HEK293 (cell line): ENCODE measurements at regions of chr6 and their contacts with region 1.

Region 1: DNA sequence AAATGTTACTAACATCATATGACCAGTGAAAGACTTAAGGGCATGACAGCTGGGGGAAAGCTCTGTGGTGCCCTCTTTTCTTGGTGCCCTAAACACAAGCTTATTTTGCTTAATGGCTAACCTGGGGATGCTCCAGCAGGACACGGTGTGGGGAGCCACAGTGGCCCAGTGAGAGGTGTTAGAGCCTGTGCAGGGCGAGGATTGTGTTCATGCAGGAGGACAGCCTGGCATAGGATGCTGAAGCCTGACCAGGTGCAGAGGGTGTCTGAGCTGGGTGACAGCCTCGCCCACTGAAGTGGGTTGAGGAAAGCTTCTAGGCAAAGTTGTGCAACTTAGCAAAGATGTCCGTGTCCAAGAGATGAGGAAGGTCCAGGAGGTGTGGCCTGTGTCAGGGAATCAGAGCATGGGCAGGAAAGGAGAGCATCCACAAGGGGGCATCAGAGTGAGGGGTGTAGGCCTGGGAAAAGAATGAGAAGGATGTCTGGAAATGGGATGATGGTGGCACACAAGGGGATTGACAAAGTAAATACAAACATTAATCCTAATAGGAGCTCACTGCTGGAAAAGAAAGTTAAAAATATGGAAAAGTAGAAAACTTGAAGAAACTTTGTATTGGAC is 33.9 kb downstream of the SLC17A4 start:
- H3K4me3 ChIP-seq: no peak overlapping the region
- H3K27ac ChIP-seq: no peak overlapping the region
- H3K4me1 ChIP-seq: no peaks in the 10 kb centered on the region
- CTCF ChIP-seq: peak; percentile 29; the same call in 1 of the 2 replicates

Region 2: DNA sequence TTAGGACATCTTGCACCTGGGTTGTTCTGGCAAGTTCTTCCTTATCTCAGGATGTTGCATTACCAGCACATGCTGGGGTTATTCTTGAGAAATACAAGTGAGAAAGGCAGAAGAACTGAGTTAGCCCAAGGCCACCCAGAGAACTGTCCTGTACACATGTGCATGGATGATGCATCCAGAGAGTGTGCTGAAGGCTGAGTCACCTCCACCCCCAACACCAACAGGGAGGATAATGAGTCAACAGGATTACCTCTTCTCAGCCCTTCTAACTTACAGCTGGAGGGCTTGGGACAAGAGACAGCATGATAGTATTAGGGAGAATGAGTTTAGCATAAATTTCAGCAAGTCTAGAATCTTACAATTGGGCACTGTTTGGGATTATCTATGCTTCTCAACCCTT is 127.9 kb before region 1 on chr6:
- CTCF ChIA-PET with region 1: no interaction called
- POLR2A ChIA-PET with region 1: no interaction called
- H3K4me3 ChIP-seq: no peak overlapping the region
- H3K27ac ChIP-seq: no peak overlapping the region
- H3K4me1 ChIP-seq: no peaks in the 10 kb centered on the region
- CTCF ChIP-seq: no peak

Region 3: GRCh38 chr6:25717866-25718740 is 70.3 kb before region 1 on chr6:
- CTCF ChIA-PET with region 1: interaction called, 11 read pairs
- POLR2A ChIA-PET with region 1: no interaction called
- H3K4me3 ChIP-seq: no peak overlapping the region
- H3K27ac ChIP-seq: no peak overlapping the region
- H3K4me1 ChIP-seq: no peaks in the 10 kb centered on the region
- CTCF ChIP-seq: no peak

Region 4: GRCh38 chr6:25804804-25805203 is 16.4 kb after region 1 on chr6:
- CTCF ChIA-PET with region 1: interaction called, 11 read pairs
- POLR2A ChIA-PET with region 1: no interaction called
- H3K4me3 ChIP-seq: no peak overlapping the region
- H3K27ac ChIP-seq: no peak overlapping the region
- H3K4me1 ChIP-seq: no peaks in the 10 kb centered on the region
- CTCF ChIP-seq: no peak

Region 5: DNA sequence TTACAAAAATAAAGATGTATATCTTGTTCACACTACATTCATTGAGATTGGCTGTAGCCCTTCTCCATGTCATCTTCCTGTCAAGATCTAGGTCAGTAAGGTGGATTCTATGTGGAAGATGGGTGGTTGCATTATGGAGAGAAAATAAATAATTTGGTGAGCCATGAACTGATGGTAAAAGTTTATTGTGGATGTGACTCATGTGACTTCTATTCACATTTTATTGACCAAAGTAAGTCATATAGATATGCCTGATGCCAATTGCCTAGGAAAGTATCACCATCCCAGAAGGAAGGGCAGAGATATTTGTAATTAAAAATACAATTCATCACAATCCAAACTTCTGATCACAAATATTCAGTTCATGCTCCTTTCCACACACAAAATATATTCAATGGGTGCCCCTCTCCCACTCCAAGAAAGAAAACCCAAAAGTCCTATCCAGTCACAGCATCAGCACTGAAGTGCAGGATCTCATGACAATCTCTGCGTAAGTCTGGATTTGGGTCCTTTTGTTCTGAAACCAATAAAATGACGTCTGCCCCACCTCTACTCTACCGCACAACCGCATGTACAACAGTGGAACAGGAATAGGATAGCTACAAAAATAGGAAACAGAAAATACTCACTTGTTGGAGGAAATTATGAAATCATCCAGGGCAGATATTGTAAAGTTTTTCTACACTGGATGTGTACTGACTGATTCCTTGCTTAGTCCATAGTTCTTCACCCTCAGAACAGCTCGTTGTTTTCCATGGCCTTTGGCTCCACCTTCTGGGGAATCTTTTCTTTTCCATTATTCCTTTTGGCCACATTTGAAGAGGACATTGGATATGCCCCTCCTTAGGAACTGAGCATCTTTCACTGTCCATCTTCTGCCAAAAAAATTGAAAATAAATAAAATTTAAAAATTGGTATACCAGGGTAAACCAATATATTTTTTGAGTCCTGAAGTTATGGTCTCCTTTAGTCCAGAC is 101.8 kb after region 1 on chr6:
- CTCF ChIA-PET with region 1: interaction called, 27 read pairs
- POLR2A ChIA-PET with region 1: no interaction called
- H3K4me3 ChIP-seq: no peak overlapping the region
- H3K27ac ChIP-seq: no peak overlapping the region
- H3K4me1 ChIP-seq: no peaks in the 10 kb centered on the region
- CTCF ChIP-seq: no peak

Region 6: DNA sequence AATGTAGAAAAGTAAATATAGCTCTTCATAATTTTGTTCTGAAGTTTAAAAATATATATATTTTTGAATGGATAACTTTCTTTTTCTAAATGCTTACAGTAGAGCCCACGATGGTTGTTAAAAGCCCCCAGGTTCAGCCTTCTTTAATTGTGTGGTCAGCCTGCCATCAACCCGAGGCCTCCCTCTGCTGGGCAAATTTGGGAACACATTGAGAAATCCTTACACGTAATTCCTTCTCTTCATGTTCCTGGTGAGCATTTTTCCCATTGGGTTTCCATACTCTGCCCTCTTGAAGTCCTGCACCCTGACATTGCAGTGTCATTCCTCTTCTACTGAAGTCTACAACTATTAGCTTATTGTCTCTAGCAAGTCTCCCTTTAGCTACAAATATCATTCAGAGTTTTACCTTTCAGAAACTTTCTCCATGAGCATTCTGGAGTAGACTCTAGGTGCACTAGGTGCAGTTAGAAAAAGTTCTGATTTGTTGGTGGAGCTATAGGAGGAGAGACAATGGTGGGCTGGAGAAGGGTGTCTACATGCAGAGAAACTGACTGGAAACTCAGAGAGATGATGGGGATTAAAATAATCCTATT is 214.8 kb after region 1 on chr6:
- CTCF ChIA-PET with region 1: interaction called, 22 read pairs
- POLR2A ChIA-PET with region 1: no interaction called
- H3K4me3 ChIP-seq: no peak overlapping the region
- H3K27ac ChIP-seq: no peak overlapping the region
- H3K4me1 ChIP-seq: no peaks in the 10 kb centered on the region
- CTCF ChIP-seq: no peak